Mammary epithelial cell (primary cell): ENCODE measurements at regions of chr20 and their contacts with region 1.

Region 1: DNA sequence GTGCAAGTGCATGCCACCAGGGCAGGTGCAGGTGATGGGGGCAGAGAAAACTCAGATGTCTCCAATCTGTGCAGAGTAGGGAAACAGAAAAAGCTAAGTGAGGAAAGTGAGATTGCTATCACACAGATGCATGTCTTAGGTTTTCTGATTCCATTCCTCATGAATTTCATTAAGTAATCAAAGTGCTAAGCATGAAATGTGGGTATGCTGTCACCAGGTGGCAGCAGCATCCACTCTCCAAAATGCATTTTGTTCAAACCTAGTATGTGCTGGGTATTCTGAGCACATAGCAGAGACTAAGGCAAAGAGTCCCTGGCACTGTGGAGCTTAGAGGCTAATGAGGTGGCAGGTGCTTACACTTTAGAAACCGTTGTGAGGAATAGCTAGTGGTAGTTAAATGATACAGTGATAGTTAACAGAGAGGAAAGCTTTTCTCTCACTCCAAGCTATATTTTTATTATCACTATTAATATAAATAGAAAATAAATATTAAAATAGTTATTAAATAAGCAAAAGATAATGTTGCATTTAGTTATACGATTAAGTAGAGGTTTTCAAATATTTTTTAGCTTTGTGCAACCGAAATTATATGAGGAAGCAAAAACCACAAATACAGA is 179.5 kb downstream of the CDH26 start:
- DNase-seq: peak; percentile 28
- H3K4me3 ChIP-seq: no peak overlapping the region
- H3K27ac ChIP-seq: no peak overlapping the region
- H3K4me1 ChIP-seq: peaks cover under 1% of the 10 kb centered on the region
- H3K27me3 ChIP-seq: no peaks in the 10 kb centered on the region
- CTCF ChIP-seq: peak; percentile 61 to 64

Region 2: GRCh38 chr20:59948828-59949720 is 188.7 kb before region 1 on chr20:
- CTCF ChIA-PET with region 1: no interaction called
- dilution Hi-C with region 1: no loop called
- in situ Hi-C with region 1: no loop called
- intact Hi-C with region 1: loop called (anchors 1 kb)
- DNase-seq: peak; percentile 37
- H3K4me3 ChIP-seq: no peak overlapping the region
- H3K27ac ChIP-seq: no peak overlapping the region
- H3K4me1 ChIP-seq: peaks cover 5% of the 10 kb centered on the region
- H3K27me3 ChIP-seq: no peaks in the 10 kb centered on the region
- CTCF ChIP-seq: peak; percentile 65 to 70

Region 3: GRCh38 chr20:60057123-60057801 is 80.5 kb before region 1 on chr20:
- CTCF ChIA-PET with region 1: interaction called, 4 read pairs
- dilution Hi-C with region 1: no loop called
- in situ Hi-C with region 1: no loop called
- intact Hi-C with region 1: loop called (anchors 2 kb)
- DNase-seq: peak; percentile 65
- H3K4me3 ChIP-seq: peak overlapping the region in 1 of 3 experiments; percentile 58
- H3K27ac ChIP-seq: no peak overlapping the region
- H3K4me1 ChIP-seq: peaks cover 63% of the 10 kb centered on the region
- H3K27me3 ChIP-seq: no peaks in the 10 kb centered on the region
- CTCF ChIP-seq: peak; percentile 90

Region 4: DNA sequence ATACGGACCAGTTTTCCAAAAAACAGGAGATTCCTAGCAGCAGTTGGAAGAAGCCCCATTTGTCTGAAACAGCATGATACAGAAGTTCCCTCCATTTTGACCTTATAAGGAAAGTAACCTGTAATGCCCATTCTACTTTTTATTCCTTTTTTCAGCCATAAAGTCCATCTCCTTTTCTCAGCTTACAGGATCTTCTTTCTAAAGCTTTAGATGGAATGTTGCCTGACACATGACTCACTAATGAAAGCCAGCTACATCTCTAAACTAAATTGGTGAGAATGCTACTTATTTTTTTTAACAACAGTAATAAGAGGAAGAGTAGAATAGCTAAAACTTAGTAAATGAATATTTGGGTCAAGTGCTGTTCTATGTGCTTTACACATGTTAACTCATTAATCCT is 54.6 kb after region 1 on chr20:
- CTCF ChIA-PET with region 1: no interaction called
- dilution Hi-C with region 1: loop called (anchors 5 kb)
- in situ Hi-C with region 1: no loop called
- intact Hi-C with region 1: no loop called
- DNase-seq: no peak
- H3K4me3 ChIP-seq: no peak overlapping the region
- H3K27ac ChIP-seq: no peak overlapping the region
- H3K4me1 ChIP-seq: no peaks in the 10 kb centered on the region
- H3K27me3 ChIP-seq: no peaks in the 10 kb centered on the region
- CTCF ChIP-seq: no peak

Region 5: DNA sequence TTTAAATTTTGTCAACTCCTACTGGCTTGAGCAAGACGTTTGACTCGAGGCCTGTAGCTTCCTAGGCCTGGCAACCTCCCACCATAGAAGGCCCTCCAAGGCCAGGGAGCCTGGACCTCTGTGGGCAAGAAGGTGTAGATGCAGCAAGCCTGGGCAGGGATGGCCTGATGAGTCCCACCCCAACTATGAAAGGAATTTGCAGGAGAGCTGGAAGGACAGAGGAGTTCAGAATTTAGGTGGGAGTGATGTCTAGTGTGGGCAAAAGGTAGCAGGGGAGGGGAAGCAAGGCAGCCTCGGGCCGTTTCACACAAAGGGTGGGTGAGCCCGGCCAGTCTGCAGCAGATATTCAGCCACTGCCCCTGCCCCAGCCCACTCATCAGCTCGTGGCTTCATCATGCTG is 65.7 kb after region 1 on chr20:
- CTCF ChIA-PET with region 1: no interaction called
- dilution Hi-C with region 1: no loop called
- in situ Hi-C with region 1: no loop called
- intact Hi-C with region 1: loop called (anchors 2 kb)
- DNase-seq: peak; percentile 67
- H3K4me3 ChIP-seq: no peak overlapping the region
- H3K27ac ChIP-seq: no peak overlapping the region
- H3K4me1 ChIP-seq: peaks cover 31% of the 10 kb centered on the region
- H3K27me3 ChIP-seq: no peaks in the 10 kb centered on the region
- CTCF ChIP-seq: no peak

Region 6: GRCh38 chr20:60365056-60365666 is 227.4 kb after region 1 on chr20:
- CTCF ChIA-PET with region 1: no interaction called
- dilution Hi-C with region 1: no loop called
- in situ Hi-C with region 1: no loop called
- intact Hi-C with region 1: loop called (anchors 5 kb)
- DNase-seq: no peak
- H3K4me3 ChIP-seq: no peak overlapping the region
- H3K27ac ChIP-seq: no peak overlapping the region
- H3K4me1 ChIP-seq: no peaks in the 10 kb centered on the region
- H3K27me3 ChIP-seq: no peaks in the 10 kb centered on the region
- CTCF ChIP-seq: peak; percentile 30 to 40